Activated CD8-positive, alpha-beta T cell treated with anti-CD3 and anti-CD28 coated beads for 36 hours (primary cell): ENCODE measurements at regions of chr4 and their contacts with region 1.

Region 1: GRCh38 chr4:108072300-108072699 is 82.6 kb downstream of the HADH start:
- DNase-seq: peak; percentile 89
- ATAC-seq: peak; percentile 93
- H3K4me3 Mint-ChIP-seq: peak overlapping the region; percentile 16
- H3K27ac Mint-ChIP-seq: peak overlapping the region; percentile 87
- H3K4me1 Mint-ChIP-seq: peaks cover 78% of the 10 kb centered on the region
- H3K27me3 Mint-ChIP-seq: no peaks in the 10 kb centered on the region
- CTCF ChIP-seq: no peak

Region 2: GRCh38 chr4:108036213-108036612 is 36.1 kb before region 1 on chr4:
- CTCF ChIA-PET with region 1: no interaction called
- POLR2A ChIA-PET with region 1: interaction called, 6 read pairs
- intact Hi-C with region 1: loop called (anchors 5 kb)
- DNase-seq: peak; percentile 89
- ATAC-seq: peak; percentile 83
- H3K4me3 Mint-ChIP-seq: peak overlapping the region; percentile 71
- H3K27ac Mint-ChIP-seq: peak overlapping the region; percentile 98
- H3K4me1 Mint-ChIP-seq: peaks cover 61% of the 10 kb centered on the region
- H3K27me3 Mint-ChIP-seq: no peaks in the 10 kb centered on the region
- CTCF ChIP-seq: no peak

Region 3: DNA sequence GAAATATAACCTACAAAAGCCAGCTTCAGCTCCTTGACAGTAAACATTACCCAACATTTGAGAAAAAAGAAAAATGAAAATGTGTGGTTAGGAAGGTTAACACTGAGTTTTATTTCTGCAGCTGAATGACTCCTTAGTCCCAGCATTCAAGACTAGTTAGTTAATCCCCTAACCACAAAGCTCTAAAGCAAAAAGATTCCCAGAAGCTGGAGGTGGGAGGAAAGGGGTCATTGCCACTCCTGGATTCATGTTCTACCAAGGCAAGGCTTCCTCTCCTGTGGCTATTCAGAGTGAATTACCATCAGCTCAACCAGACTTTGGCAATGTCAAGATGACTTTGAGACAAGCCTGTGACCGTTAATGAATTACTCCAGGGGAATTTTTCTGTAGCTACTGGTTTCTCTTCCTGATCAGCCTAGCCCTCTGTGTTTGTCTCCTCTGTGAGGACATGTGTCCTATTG is 19.0 kb before region 1 on chr4:
- CTCF ChIA-PET with region 1: interaction called, 3 read pairs
- POLR2A ChIA-PET with region 1: interaction called, 10 read pairs
- intact Hi-C with region 1: no loop called
- DNase-seq: no peak
- ATAC-seq: no peak
- H3K4me3 Mint-ChIP-seq: no peak overlapping the region
- H3K27ac Mint-ChIP-seq: peak overlapping the region; percentile 98
- H3K4me1 Mint-ChIP-seq: peaks cover 87% of the 10 kb centered on the region
- H3K27me3 Mint-ChIP-seq: no peaks in the 10 kb centered on the region
- CTCF ChIP-seq: no peak

Region 4: DNA sequence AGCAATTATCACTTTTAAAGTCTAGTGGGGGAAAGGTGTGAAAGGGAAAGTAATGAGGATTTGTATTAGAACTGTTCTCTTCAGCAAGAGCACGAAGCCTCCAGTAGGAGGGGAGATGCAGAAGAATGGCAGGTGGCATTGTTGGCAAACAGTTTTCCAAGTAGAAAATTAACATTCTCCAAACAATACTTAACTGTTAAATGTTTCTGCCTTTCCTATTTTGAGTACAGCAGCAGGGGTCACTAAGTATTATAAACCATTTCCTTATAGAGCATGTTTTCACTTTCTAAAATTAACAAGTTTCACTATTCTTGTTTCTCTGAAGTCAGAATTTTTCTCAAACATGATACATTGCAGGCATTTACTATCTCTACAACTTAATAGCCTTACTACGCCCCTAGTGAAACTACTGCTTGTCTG is 37.7 kb after region 1 on chr4:
- CTCF ChIA-PET with region 1: interaction called, 4 read pairs
- POLR2A ChIA-PET with region 1: interaction called, 6 read pairs
- intact Hi-C with region 1: loop called (anchors 5 kb)
- DNase-seq: no peak
- ATAC-seq: peak; percentile 20
- H3K4me3 Mint-ChIP-seq: peak overlapping the region; percentile 44
- H3K27ac Mint-ChIP-seq: peak overlapping the region; percentile 96
- H3K4me1 Mint-ChIP-seq: peaks cover 88% of the 10 kb centered on the region
- H3K27me3 Mint-ChIP-seq: no peaks in the 10 kb centered on the region
- CTCF ChIP-seq: no peak

Region 5: GRCh38 chr4:108247387-108248049 is 175.2 kb after region 1 on chr4:
- CTCF ChIA-PET with region 1: no interaction called
- POLR2A ChIA-PET with region 1: no interaction called
- intact Hi-C with region 1: no loop called
- DNase-seq: no peak
- ATAC-seq: no peak
- H3K4me3 Mint-ChIP-seq: no peak overlapping the region
- H3K27ac Mint-ChIP-seq: no peak overlapping the region
- H3K4me1 Mint-ChIP-seq: peaks cover 7% of the 10 kb centered on the region
- H3K27me3 Mint-ChIP-seq: no peaks in the 10 kb centered on the region
- CTCF ChIP-seq: no peak